Upper lobe of right lung (tissue), 1 donor: ENCODE measurements at regions of chr7 and their contacts with region 1.

Region 1: DNA sequence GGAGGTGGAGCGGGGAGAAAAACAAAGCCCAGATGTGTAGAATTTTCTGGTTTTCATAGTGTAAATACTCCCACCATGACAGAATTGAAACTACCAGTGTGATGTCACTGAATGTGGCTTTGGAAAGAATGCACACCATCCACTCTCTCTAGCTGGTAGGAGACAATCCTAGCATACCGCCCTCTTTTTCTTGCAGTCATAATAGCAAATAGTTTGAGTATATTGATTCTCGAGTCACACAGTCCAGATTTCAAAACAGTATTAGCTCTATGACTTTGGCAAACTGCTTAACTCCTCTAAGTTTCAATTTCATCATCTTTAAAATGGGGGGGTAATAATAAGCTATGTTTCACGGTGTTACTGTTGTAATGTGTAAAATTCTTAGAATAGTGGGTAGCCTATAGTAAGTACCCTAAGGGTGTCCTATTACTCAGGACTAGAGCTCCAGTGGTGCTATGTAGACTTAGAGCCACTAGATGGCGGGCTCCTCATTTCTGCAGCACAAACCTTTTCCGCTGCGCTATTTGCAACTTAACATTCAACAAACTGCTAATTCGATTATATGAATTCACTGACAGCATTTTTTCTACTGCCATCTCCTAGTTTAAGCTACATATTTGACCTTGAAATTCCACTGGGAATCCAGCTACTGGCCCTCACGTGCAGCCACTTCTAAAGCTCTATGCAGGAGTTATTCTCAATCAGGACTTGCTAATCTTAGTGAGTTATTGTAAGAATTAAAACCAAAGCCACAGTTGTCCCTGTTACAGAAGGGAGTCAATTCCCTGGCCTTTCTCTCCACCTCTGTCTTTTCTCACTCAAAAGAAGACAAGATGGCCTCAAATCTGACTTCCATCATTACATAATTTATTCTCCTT is 18.7 kb downstream of the TAS2R40 start:
- DNase-seq: no peak
- ATAC-seq: peak; percentile 96
- H3K4me3 ChIP-seq: no peak overlapping the region
- H3K27ac ChIP-seq: peak overlapping the region; percentile 37
- H3K4me1 ChIP-seq: peaks cover 7% of the 10 kb centered on the region
- H3K27me3 ChIP-seq: no peaks in the 10 kb centered on the region
- CTCF ChIP-seq: peak; percentile 96

Region 2: GRCh38 chr7:142298009-142298408 is 942.5 kb before region 1 on chr7:
- intact Hi-C with region 1: no loop called
- DNase-seq: no peak
- ATAC-seq: peak; percentile 39
- H3K4me3 ChIP-seq: no peak overlapping the region
- H3K27ac ChIP-seq: no peak overlapping the region
- H3K4me1 ChIP-seq: no peaks in the 10 kb centered on the region
- H3K27me3 ChIP-seq: no peaks in the 10 kb centered on the region
- CTCF ChIP-seq: peak; percentile 18

Region 3: GRCh38 chr7:143305423-143306070 is 65.0 kb after region 1 on chr7:
- intact Hi-C with region 1: loop called (anchors 10 kb)
- DNase-seq: peak; percentile 84
- ATAC-seq: peak; percentile 86
- H3K4me3 ChIP-seq: no peak overlapping the region
- H3K27ac ChIP-seq: no peak overlapping the region
- H3K4me1 ChIP-seq: peaks cover 5% of the 10 kb centered on the region
- H3K27me3 ChIP-seq: no peaks in the 10 kb centered on the region
- CTCF ChIP-seq: peak; percentile 70